CD8-positive, alpha-beta T cell (primary cell): ENCODE measurements at regions of chr19 and their contacts with region 1.

Region 1: GRCh38 chr19:1406774-1407499 is 449 bp upstream of the DAZAP1 start:
- DNase-seq: peak; percentile 99 to 100 (median 99)
- ATAC-seq: peak; percentile 80
- H3K4me3 ChIP-seq: peak overlapping the region; percentile 52 to 59
- H3K4me3 Mint-ChIP-seq: peak overlapping the region; percentile 79
- H3K27ac ChIP-seq: peak overlapping the region; percentile 56 to 80
- H3K27ac Mint-ChIP-seq: peak overlapping the region; percentile 89
- H3K4me1 ChIP-seq: peaks cover 48% of the 10 kb centered on the region
- H3K4me1 Mint-ChIP-seq: peaks cover 41% of the 10 kb centered on the region
- H3K27me3 ChIP-seq: no peaks in the 10 kb centered on the region
- H3K27me3 Mint-ChIP-seq: no peaks in the 10 kb centered on the region
- CTCF ChIP-seq: peak; percentile 70

Region 2: DNA sequence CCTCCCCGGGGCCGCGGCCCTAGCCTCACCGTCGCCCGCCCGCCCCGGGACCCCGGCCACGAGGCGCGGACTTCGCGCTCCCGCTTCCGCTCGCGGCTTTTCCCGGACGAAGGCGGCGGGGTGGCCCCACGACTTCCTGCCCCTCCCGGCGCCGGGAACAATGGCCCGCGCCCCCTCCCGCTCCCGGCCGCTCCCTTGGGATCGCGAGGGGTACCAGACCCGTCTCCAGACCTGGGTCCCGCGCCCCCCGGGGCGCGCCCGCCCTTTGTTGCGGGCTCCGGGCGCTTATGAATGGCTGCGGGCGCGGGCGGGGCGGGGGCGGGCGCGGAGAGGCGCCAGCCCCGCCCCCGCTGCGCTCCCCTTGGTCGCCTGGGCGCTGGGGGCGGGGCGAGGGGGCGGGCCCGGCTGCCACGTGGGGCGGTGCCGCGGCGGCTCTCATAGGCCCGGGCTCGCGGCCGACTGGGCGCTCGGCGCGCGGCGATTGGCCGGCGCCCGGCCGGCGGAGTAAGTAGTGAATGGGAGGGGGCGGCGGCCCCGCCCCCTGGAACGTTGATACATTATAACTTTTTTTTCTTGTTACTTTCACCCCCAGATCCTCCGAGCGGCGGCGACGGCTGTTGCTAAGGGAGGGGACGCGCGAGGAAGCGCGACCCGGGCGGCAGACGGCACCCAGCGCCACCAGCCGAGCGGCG is 157.5 kb before region 1 on chr19:
- CTCF ChIA-PET with region 1: no interaction called
- POLR2A ChIA-PET with region 1: no interaction called
- intact Hi-C with region 1: loop called in 1 of 2 experiments (anchors 1 kb)
- DNase-seq: peak; percentile 89 to 98 (median 95)
- ATAC-seq: peak; percentile 55
- H3K4me3 ChIP-seq: peak overlapping the region; percentile 86 to 88
- H3K4me3 Mint-ChIP-seq: peak overlapping the region; percentile 87
- H3K27ac ChIP-seq: peak overlapping the region; percentile 83 to 84
- H3K27ac Mint-ChIP-seq: peak overlapping the region; percentile 88
- H3K4me1 ChIP-seq: peaks cover 31% of the 10 kb centered on the region
- H3K4me1 Mint-ChIP-seq: peaks cover 10% of the 10 kb centered on the region
- H3K27me3 ChIP-seq: no peaks in the 10 kb centered on the region
- H3K27me3 Mint-ChIP-seq: no peaks in the 10 kb centered on the region
- CTCF ChIP-seq: no peak

Region 3: GRCh38 chr19:1355568-1356507 is 51.1 kb before region 1 on chr19:
- CTCF ChIA-PET with region 1: no interaction called
- POLR2A ChIA-PET with region 1: no interaction called
- intact Hi-C with region 1: loop called in 1 of 2 experiments (anchors 1 kb)
- DNase-seq: peak in 1 of 9 experiments; percentile 33
- ATAC-seq: no peak
- H3K4me3 ChIP-seq: peak overlapping the region; percentile 71 to 74
- H3K4me3 Mint-ChIP-seq: peak overlapping the region; percentile 85
- H3K27ac ChIP-seq: no peak overlapping the region
- H3K27ac Mint-ChIP-seq: peak overlapping the region; percentile 4
- H3K4me1 ChIP-seq: peaks cover 10% of the 10 kb centered on the region
- H3K4me1 Mint-ChIP-seq: peaks cover 12% of the 10 kb centered on the region
- H3K27me3 ChIP-seq: no peaks in the 10 kb centered on the region
- H3K27me3 Mint-ChIP-seq: no peaks in the 10 kb centered on the region
- CTCF ChIP-seq: no peak

Region 4: DNA sequence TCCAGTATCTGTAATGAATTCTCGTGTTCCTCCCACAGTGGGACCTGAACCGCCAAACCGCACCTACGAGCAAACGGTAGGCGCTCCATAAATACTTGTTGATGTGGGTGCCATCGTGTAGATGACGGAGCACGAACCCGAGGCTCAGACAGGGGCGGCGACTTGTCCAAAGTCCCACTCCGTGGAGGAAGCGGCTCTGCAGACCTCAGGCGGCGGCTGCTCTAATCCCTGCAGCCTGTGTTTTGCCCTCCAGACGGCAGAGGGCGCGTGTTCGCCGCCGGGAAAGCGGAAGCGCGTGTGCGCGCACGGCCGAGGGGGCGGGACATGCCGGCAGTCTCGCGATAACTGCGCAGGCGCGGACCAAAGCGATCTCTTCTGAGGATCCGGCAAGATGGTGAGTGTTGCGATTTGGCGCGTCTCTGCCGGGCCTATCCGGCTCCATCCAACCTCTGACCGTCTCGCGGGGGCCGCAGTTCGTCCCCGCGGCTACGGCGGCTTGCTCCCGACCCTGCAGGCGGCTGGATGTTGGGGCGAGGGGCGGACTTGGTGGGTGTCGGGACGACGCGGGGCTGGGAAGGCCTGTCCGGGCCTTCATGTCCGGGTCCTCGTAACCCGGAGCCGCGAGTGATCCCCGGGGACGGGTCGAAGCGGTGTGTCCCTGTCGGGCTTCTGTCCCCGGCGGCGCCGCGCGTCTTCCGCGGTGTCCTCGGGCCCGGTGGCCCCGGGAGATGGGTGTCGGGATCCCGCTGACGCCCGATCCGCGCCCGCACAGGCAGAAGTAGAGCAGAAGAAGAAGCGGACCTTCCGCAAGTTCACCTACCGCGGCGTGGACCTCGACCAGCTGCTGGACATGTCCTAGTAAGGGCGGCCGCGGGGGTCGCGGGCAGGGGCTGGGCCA is 31.3 kb after region 1 on chr19 and contains the start of gene RPS15:
- CTCF ChIA-PET with region 1: interaction called, 5 read pairs
- POLR2A ChIA-PET with region 1: interaction called, 4 read pairs
- intact Hi-C with region 1: loop called (anchors 1 kb)
- DNase-seq: peak; percentile 92 to 98 (median 96)
- ATAC-seq: peak; percentile 90
- H3K4me3 ChIP-seq: peak within 1 kb of the TSS; percentile 79 to 95
- H3K4me3 Mint-ChIP-seq: peak within 1 kb of the TSS; percentile 98
- H3K27ac ChIP-seq: peak within 1 kb of the TSS; percentile 82 to 93
- H3K27ac Mint-ChIP-seq: peak within 1 kb of the TSS; percentile 100
- H3K4me1 ChIP-seq: peaks cover 22% of the 10 kb centered on the region
- H3K4me1 Mint-ChIP-seq: peaks cover 21% of the 10 kb centered on the region
- H3K27me3 ChIP-seq: no peaks in the 10 kb centered on the region
- H3K27me3 Mint-ChIP-seq: no peaks in the 10 kb centered on the region
- CTCF ChIP-seq: peak; percentile 95
- total RNA-seq, gene RPS15: 2,066 to 2,071 TPM

Region 5: DNA sequence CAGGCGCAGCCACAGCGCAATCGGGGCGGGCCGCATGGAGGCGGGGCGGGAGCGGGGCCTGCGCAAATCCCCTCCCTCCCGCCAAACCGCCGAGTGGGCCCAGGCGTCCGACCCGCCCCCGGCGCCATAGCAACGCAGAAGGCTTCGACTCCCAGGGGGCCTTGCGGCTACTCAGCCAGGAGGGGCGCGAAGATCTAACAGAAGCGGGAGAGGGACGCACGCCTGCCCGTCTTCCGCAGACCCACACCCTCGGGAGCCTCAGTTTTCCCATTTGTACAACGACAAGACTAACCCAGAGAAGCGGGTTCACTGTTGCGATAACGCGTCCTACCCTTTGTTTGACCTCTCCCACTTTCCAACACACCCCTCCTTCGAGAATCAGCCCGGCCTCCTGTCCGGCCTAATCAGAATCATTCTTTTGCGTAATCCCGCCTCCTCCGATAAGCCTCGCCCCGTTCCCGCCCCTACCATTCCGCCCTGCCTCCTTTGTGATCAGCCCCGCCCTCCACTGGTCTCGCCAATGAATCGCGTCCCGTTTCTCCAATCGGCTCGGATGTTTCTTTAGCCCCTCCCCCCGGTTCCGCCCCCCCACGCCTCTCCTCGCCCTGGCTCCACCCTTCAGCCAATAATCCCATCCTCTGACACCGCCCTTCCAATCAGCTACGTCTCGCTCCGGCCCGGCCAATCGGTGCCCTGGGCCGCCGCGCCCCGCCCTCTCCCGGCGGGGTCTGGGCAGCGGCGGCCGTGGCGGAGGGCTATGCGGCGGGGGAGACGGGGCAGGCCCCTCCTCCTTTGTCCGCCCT is 83.6 kb after region 1 on chr19 and contains the start of gene PCSK4:
- CTCF ChIA-PET with region 1: no interaction called
- POLR2A ChIA-PET with region 1: no interaction called
- intact Hi-C with region 1: loop called (anchors 1 kb)
- DNase-seq: peak; percentile 95 to 99 (median 97)
- ATAC-seq: peak; percentile 88
- H3K4me3 ChIP-seq: peak within 1 kb of the TSS; percentile 59 to 71
- H3K4me3 Mint-ChIP-seq: peak within 1 kb of the TSS; percentile 90
- H3K27ac ChIP-seq: peak within 1 kb of the TSS; percentile 35 to 57
- H3K27ac Mint-ChIP-seq: peak within 1 kb of the TSS; percentile 90
- H3K4me1 ChIP-seq: peaks cover 15% of the 10 kb centered on the region
- H3K4me1 Mint-ChIP-seq: peaks cover 16% of the 10 kb centered on the region
- H3K27me3 ChIP-seq: no peaks in the 10 kb centered on the region
- H3K27me3 Mint-ChIP-seq: no peaks in the 10 kb centered on the region
- CTCF ChIP-seq: no peak
- total RNA-seq, gene PCSK4: 5.4 to 6.1 TPM

Region 6: DNA sequence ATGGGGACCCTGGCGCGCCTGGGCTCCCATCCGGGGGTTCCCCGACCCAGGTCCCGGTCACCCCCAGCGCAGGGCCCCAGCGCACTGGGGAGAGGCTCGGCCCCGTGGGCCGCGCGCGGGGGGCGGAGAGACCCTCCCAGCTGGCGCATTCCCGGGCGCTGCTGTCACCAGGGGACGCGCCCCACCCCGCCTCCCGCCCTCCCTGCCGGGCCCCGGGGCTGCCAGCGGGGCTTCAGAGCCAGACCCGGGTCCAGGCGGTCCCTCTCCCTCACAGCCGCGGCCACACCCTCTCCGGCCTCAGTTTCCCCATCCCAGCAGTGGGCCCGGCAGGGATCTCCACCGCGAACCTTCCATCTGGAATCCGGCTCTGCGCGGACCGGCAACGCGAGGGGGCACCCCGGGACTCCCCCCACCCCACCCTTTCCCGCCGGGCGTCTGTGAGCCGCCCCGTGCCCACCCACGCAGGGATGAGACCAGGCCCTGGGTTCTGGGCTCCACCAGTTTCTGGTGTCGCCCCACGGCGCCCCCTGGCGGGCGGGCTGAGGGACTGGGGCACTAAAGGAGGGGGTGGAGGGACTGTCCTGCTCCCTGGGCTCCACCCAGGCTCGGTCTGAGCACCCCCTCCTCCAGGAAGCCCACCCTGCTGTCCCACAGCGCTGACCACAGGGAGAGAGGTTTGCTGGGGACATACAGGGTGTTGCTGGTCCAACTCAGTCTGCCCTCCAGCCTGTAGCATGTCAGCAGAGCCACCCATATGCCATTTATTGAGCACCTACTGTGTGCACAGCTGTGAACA is 106.8 kb after region 1 on chr19:
- CTCF ChIA-PET with region 1: no interaction called
- POLR2A ChIA-PET with region 1: no interaction called
- intact Hi-C with region 1: no loop called
- DNase-seq: peak in 8 of 9 experiments; percentile 45 to 79 (median 76)
- ATAC-seq: peak; percentile 67
- H3K4me3 ChIP-seq: no peak overlapping the region
- H3K4me3 Mint-ChIP-seq: no peak overlapping the region
- H3K27ac ChIP-seq: no peak overlapping the region
- H3K27ac Mint-ChIP-seq: no peak overlapping the region
- H3K4me1 ChIP-seq: peaks cover 12% of the 10 kb centered on the region
- H3K4me1 Mint-ChIP-seq: peaks cover 11% of the 10 kb centered on the region
- H3K27me3 ChIP-seq: peaks cover 5 to 12% of the 10 kb centered on the region in 2 experiments
- H3K27me3 Mint-ChIP-seq: peaks cover 10% of the 10 kb centered on the region
- CTCF ChIP-seq: peak; percentile 66

Region 7: DNA sequence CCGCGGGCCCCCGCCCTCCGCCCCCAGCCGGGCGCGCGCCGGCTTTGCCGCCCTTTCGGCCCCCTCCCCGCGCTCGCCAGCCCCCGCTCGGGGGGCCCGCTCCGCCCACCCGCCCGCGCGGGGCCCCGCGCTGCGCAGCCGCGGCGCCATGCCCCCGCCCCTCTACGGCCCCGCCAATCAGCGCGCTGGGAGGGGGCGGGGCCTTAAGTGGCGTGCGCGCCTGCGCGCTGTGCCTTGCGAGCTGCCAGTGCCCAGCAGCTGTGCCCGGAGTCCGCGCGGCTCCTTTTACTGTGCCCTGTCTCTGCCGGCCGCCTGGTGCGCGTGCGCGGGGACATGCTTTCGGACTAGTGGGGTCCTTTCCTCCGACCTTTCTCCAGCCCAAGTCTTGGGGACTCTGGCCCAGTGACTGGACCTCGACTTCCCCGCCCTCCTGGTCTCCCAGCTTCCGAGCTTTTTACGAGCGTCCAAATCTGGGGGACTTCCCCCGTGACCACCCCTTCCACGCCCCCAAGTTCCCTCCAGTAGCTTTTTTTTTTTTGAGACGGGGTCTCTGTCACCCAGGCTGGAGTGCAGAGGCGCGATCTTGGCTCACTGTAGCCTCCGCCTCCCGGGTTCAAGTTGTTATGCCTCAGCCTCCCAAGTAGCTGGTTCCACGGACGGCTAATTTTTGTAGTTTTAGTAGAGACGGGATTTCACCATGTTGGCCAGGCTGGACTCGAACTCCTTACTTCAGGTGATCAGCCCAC is 186.0 kb after region 1 on chr19 and contains the start of gene MBD3:
- CTCF ChIA-PET with region 1: no interaction called
- POLR2A ChIA-PET with region 1: no interaction called
- intact Hi-C with region 1: loop called in 1 of 2 experiments (anchors 1 kb)
- DNase-seq: peak; percentile 72 to 95 (median 84)
- ATAC-seq: peak; percentile 89
- H3K4me3 ChIP-seq: peak within 1 kb of the TSS; percentile 80 to 95
- H3K4me3 Mint-ChIP-seq: peak within 1 kb of the TSS; percentile 88
- H3K27ac ChIP-seq: peak within 1 kb of the TSS; percentile 84 to 88
- H3K27ac Mint-ChIP-seq: peak within 1 kb of the TSS; percentile 91
- H3K4me1 ChIP-seq: peaks cover 18% of the 10 kb centered on the region
- H3K4me1 Mint-ChIP-seq: peaks cover 22% of the 10 kb centered on the region
- H3K27me3 ChIP-seq: no peaks in the 10 kb centered on the region
- H3K27me3 Mint-ChIP-seq: no peaks in the 10 kb centered on the region
- CTCF ChIP-seq: no peak
- total RNA-seq, gene MBD3: 31.0 to 37.2 TPM

Region 8: GRCh38 chr19:1624458-1624857 is 217.5 kb after region 1 on chr19:
- CTCF ChIA-PET with region 1: no interaction called
- POLR2A ChIA-PET with region 1: no interaction called
- intact Hi-C with region 1: no loop called
- DNase-seq: peak; percentile 22 to 73 (median 61)
- ATAC-seq: peak; percentile 82
- H3K4me3 ChIP-seq: no peak overlapping the region
- H3K4me3 Mint-ChIP-seq: no peak overlapping the region
- H3K27ac ChIP-seq: no peak overlapping the region
- H3K27ac Mint-ChIP-seq: no peak overlapping the region
- H3K4me1 ChIP-seq: no peaks in the 10 kb centered on the region
- H3K4me1 Mint-ChIP-seq: peaks cover 7% of the 10 kb centered on the region
- H3K27me3 ChIP-seq: no peaks in the 10 kb centered on the region
- H3K27me3 Mint-ChIP-seq: no peaks in the 10 kb centered on the region
- CTCF ChIP-seq: peak; percentile 47